ENCODE measurements at regions of chr7 and their contacts with region 1.

Region 1: GRCh38 chr7:39357648-39358047 is 208.6 kb upstream of the YAE1 start:
- DNase-seq: peak in 1 of 2 experiments; percentile 78
- H3K4me3 ChIP-seq: no peak overlapping the region
- H3K27ac ChIP-seq: no peak overlapping the region
- H3K4me1 ChIP-seq: peaks cover 0 to 16% (median 7%) of the 10 kb centered on the region in 4 experiments; a peak in 5 of 7 replicates
- H3K27me3 ChIP-seq: no peaks in the 10 kb centered on the region
- CTCF ChIP-seq: peak; percentile 68 to 74 (median 72)
- EP300 ChIP-seq: no peak
- POLR2A ChIP-seq: no peak
- RAD21 ChIP-seq: peak; percentile 57 to 71

Region 2: DNA sequence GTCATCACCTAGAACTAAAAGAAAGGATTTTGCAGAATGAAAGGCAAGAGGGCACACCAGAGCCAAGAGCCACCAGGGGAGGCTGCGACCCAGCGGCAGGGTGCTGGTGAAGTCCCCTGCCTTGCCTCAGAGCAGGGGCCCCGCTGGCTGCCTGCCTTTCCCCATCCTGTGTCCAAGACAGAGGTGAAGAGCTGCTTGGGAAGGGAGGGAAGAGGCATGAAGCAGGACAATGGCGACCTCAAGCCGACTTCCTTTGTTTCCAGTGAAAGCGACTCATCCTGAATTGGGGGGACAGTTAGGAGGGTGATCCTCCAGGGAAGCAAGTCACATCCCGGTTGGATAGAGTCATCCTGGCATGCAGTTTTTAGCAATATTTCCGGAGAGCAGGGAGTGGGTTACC is 46.9 kb before region 1 on chr7:
- CTCF ChIA-PET with region 1: interaction called, 11 read pairs
- POLR2A ChIA-PET with region 1: no interaction called
- DNase-seq: no peak
- H3K4me3 ChIP-seq: no peak overlapping the region
- H3K27ac ChIP-seq: no peak overlapping the region
- H3K4me1 ChIP-seq: peaks cover 2 to 14% (median 6%) of the 10 kb centered on the region in 4 experiments; a peak in 6 of 7 replicates
- H3K27me3 ChIP-seq: no peaks in the 10 kb centered on the region
- CTCF ChIP-seq: peak; percentile 26 to 45 (median 42)
- EP300 ChIP-seq: no peak
- POLR2A ChIP-seq: no peak
- RAD21 ChIP-seq: peak; percentile 61 to 72

Region 3: GRCh38 chr7:39333701-39334100 is 23.9 kb before region 1 on chr7:
- CTCF ChIA-PET with region 1: interaction called, 15 read pairs
- POLR2A ChIA-PET with region 1: no interaction called
- DNase-seq: no peak
- H3K4me3 ChIP-seq: peak overlapping the region in 1 of 4 experiments; percentile 28; a peak in 1 of 8 replicates
- H3K27ac ChIP-seq: no peak overlapping the region
- H3K4me1 ChIP-seq: peaks cover 0 to 6% (median 5%) of the 10 kb centered on the region in 4 experiments; a peak in 4 of 7 replicates
- H3K27me3 ChIP-seq: no peaks in the 10 kb centered on the region; a peak in 1 of 7 replicates
- CTCF ChIP-seq: no peak
- EP300 ChIP-seq: no peak
- POLR2A ChIP-seq: no peak
- RAD21 ChIP-seq: no peak; a peak in 1 of 4 replicates

Region 4: GRCh38 chr7:39341083-39341482 is 16.6 kb before region 1 on chr7:
- CTCF ChIA-PET with region 1: interaction called, 15 read pairs
- POLR2A ChIA-PET with region 1: no interaction called
- DNase-seq: no peak
- H3K4me3 ChIP-seq: no peak overlapping the region
- H3K27ac ChIP-seq: no peak overlapping the region
- H3K4me1 ChIP-seq: peaks cover 0 to 3% (median 0%) of the 10 kb centered on the region in 4 experiments; a peak in 1 of 7 replicates
- H3K27me3 ChIP-seq: no peaks in the 10 kb centered on the region
- CTCF ChIP-seq: no peak
- EP300 ChIP-seq: no peak
- POLR2A ChIP-seq: no peak
- RAD21 ChIP-seq: no peak

Region 5: DNA sequence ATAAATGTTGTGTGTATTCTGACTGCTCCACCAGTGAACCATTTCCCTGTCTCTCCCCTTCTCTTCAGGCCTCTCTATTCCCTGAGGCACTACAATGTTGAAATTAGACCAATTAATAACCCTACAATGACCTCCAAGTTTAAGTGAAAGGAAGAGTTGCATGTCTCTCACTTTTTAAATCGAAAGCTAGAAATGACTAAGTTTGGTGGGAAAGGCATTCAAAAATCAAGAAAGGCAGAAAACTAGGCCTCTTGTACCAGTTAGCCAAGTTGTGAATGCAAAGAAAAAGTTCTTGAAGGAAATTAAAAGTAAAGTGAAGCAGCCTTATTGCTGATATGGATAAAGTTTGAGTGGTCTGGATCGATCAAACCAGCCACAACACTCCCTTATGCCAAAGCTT is 10.3 kb after region 1 on chr7:
- CTCF ChIA-PET with region 1: interaction called, 14 read pairs
- POLR2A ChIA-PET with region 1: no interaction called
- DNase-seq: no peak
- H3K4me3 ChIP-seq: no peak overlapping the region
- H3K27ac ChIP-seq: no peak overlapping the region
- H3K4me1 ChIP-seq: no peaks in the 10 kb centered on the region
- H3K27me3 ChIP-seq: no peaks in the 10 kb centered on the region
- CTCF ChIP-seq: no peak
- EP300 ChIP-seq: no peak
- POLR2A ChIP-seq: no peak
- RAD21 ChIP-seq: no peak

Measured in H1 (cell line).